Left cardiac atrium (tissue), 4 donors: ENCODE measurements at regions of chr15 and their contacts with region 1.

Region 1: DNA sequence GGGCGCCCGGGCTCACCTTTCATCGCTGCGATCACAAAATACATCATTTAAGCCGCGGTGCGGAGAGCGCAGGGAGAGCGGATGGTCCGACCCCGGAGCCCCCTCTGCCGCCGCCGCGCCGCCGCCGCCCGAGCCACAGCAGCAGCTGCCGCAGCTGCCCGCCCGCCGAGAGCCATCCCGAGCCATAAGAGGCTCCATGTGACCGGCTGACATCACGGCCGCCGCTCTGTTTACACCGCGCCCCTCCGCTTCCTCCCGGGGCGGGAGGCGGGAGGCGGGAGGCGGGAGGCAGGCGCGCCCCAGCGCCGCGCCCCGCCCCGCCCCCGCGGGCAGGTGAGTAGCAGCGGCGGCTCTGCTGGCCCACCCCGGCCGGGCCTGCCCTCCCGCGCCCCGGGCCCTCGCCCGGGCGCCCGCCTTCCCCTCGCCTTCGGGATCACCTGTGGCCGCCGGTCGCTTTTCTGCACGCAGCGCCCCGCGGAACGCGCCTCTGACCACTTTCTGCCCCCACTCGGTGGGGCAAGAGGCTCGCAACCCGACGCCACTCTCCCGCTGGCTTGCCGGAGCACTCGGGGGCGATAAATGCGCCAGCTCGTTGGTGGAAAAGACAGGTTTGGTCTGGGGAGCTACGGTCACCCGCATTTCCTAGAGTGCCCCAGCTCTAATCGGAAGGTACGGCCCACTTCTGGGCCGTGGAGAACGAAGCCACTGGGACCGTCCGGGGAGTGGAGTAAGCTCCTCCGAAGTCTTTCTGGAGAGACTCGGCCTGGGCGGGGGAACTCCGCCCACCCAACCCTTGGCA is 113.6 kb upstream of the ICE2 start:
- DNase-seq: peak; percentile 88
- ATAC-seq: peak; percentile 93 to 94

Region 2: DNA sequence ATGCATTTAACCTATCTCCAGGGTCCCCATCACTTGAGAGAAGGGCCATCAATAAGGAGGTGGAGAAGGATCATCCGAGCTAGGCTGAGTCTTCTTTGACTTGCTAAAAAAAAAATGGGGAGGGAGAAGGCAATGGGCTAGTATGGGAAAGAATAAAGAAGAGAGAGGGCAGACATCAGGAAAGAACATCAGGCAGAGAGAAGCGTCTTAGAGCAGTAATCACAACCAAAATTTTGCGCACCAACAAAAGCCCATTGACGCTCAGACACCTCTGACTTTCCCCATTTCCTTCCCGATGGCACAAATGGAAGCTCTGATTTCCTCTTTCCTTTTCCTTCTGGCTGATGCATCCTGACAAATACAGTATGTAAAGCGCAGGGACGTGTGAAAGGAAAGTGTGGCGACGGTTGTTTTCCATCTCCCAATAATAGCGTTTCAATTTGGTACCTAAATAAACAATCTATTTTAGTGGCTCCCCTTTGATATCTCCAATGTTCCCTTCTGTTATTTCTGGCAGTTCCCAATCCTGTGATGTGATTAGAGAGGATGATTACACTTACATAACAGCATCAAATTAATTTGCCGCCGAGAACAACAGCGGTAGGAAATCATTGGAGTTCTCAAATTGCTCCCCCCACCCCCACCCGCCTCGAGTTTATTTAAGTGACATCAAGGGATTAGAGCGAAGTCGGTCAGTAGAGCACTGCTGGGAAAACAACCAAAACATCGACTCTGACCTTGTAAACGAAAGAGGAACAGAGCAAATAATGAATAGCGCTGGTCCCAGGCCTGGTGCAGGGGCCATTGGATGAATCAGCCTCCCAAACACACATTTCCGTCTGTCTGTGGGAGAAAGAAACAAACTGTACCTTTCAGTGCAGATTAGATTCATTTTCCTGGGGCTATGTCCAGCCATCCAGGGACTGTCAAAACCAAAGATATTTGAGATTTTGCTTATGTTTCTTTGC is 159.7 kb after region 1 on chr15:
- intact Hi-C with region 1: loop called in 1 of 2 experiments (anchors 5 kb)
- DNase-seq: peak; percentile 48
- ATAC-seq: peak; percentile 92 to 94

Region 3: GRCh38 chr15:60830479-60830878 is 237.9 kb after region 1 on chr15:
- intact Hi-C with region 1: no loop called
- DNase-seq: no peak
- ATAC-seq: peak in 1 of 2 donors; percentile 75